A673 (cell line): ENCODE measurements at regions of chr2 and their contacts with region 1.

Region 1: GRCh38 chr2:74919827-74920226 is 38.6 kb upstream of the POLE4 start:
- DNase-seq: peak; percentile 70
- H3K4me3 ChIP-seq: peak overlapping the region; percentile 38
- H3K27ac ChIP-seq: no peak overlapping the region
- H3K4me1 ChIP-seq: no peaks in the 10 kb centered on the region
- H3K27me3 ChIP-seq: no peaks in the 10 kb centered on the region
- CTCF ChIP-seq: peak; percentile 80

Region 2: DNA sequence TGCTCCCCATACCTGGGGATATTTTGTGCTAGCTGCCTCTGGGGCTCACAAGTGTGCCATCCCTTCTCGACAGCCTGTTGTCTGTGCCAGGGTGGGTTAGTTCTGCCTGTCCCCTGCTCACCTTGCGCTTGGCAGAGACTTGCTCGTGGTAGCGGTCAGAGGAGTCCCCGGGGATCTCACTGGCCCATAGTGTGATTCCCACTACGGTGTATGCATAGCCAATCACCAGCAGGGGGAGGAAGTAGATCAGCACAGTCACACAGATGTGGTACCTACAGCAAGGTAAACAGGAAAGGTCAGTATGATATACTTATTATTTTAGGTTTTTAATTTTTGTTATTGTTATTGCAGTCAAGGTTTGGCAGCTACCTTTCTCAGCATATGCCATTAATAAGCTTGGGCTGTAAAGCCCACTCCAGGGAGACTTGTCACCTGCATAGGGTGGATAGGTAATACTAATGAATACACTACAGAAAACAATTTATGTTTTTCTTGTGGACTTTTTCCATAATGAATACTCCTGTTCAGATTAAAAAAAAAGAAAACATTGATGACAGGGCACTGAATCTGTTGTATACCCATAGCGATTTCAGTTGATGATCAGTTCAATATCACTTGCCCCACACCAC is 133.8 kb after region 1 on chr2:
- CTCF ChIA-PET with region 1: no interaction called
- POLR2A ChIA-PET with region 1: no interaction called
- intact Hi-C with region 1: loop called (anchors 5 kb)
- DNase-seq: peak; percentile 20
- H3K4me3 ChIP-seq: no peak overlapping the region
- H3K27ac ChIP-seq: no peak overlapping the region
- H3K4me1 ChIP-seq: no peaks in the 10 kb centered on the region
- H3K27me3 ChIP-seq: no peaks in the 10 kb centered on the region
- CTCF ChIP-seq: peak; percentile 66

Region 3: GRCh38 chr2:75199428-75200011 is 279.7 kb after region 1 on chr2 and contains the start of gene TACR1:
- CTCF ChIA-PET with region 1: no interaction called
- POLR2A ChIA-PET with region 1: no interaction called
- intact Hi-C with region 1: loop called (anchors 2 kb)
- DNase-seq: peak; percentile 87
- H3K4me3 ChIP-seq: peak within 1 kb of the TSS; percentile 39
- H3K27ac ChIP-seq: no peak within 1 kb of the TSS
- H3K4me1 ChIP-seq: peaks cover 15% of the 10 kb centered on the region
- H3K27me3 ChIP-seq: peaks cover 77% of the 10 kb centered on the region
- CTCF ChIP-seq: peak; percentile 85
- total RNA-seq, gene TACR1: not detected in 2 replicates

Region 4: GRCh38 chr2:75290600-75291150 is 370.8 kb after region 1 on chr2:
- CTCF ChIA-PET with region 1: no interaction called
- POLR2A ChIA-PET with region 1: no interaction called
- intact Hi-C with region 1: no loop called
- DNase-seq: peak; percentile 69
- H3K4me3 ChIP-seq: no peak overlapping the region
- H3K27ac ChIP-seq: no peak overlapping the region
- H3K4me1 ChIP-seq: peaks cover 10% of the 10 kb centered on the region
- H3K27me3 ChIP-seq: no peaks in the 10 kb centered on the region
- CTCF ChIP-seq: peak; percentile 59